ENCODE measurements at regions of chr14 and their contacts with region 1.

Region 1: DNA sequence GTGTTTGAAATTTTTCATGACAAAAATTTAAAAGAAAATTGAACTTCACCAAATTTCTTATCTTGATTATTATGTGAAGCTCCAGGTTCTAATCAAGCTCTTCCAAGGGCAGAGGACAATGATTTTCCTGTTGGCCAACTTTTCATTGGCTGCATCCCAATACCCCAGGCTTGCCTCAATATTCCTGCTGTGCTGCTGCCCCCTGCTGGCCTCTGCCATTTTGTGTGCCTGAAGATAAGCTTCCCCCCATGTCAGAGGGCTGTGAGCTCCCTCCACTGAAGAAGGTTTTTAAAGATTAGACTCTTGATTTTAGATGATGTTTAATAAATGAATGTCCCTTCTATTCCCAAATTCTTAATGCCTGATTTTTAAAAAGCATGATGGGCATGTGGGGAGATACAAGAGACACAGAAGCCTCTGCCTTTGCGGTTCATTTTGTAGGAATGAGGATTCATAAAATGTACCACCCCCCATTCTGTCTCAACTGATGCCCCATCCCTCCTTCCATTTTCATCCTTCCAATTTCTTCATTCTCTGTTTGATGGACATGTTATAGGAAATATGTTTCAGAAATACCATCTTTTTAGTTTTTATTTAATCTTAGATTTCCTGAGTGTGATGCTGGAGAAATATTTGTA is 76.7 kb upstream of the RGS6 start:
- DNase-seq: peak; percentile 31
- ATAC-seq: peak; percentile 85
- H3K4me3 ChIP-seq: no peak overlapping the region
- H3K27ac ChIP-seq: peak overlapping the region; percentile 58; the same call in 1 of the 2 replicates
- H3K4me1 ChIP-seq: peaks cover 10% of the 10 kb centered on the region
- H3K27me3 ChIP-seq: no peaks in the 10 kb centered on the region
- CTCF ChIP-seq: peak; percentile 68 to 77 (median 71)
- EP300 ChIP-seq: no peak
- POLR2A ChIP-seq: no peak
- RAD21 ChIP-seq: peak; percentile 78

Region 2: GRCh38 chr14:71103662-71104484 is 751.6 kb before region 1 on chr14:
- CTCF ChIA-PET with region 1: interaction called, 27 read pairs
- POLR2A ChIA-PET with region 1: no interaction called
- RAD21 ChIA-PET with region 1: interaction called, 3 read pairs
- SMC1A ChIA-PET with region 1: interaction called, 5 read pairs
- in situ Hi-C with region 1: no loop called
- intact Hi-C with region 1: no loop called
- DNase-seq: peak; percentile 13
- ATAC-seq: peak; percentile 88
- H3K4me3 ChIP-seq: no peak overlapping the region
- H3K27ac ChIP-seq: no peak overlapping the region
- H3K4me1 ChIP-seq: no peaks in the 10 kb centered on the region
- H3K27me3 ChIP-seq: no peaks in the 10 kb centered on the region
- CTCF ChIP-seq: peak; percentile 65 to 82 (median 75)
- EP300 ChIP-seq: no peak
- POLR2A ChIP-seq: no peak
- RAD21 ChIP-seq: peak; percentile 69

Region 3: GRCh38 chr14:71138448-71139293 is 716.8 kb before region 1 on chr14:
- CTCF ChIA-PET with region 1: interaction called, 88 read pairs
- POLR2A ChIA-PET with region 1: no interaction called
- RAD21 ChIA-PET with region 1: interaction called, 29 read pairs
- SMC1A ChIA-PET with region 1: interaction called, 31 read pairs
- in situ Hi-C with region 1: no loop called
- intact Hi-C with region 1: loop called (anchors 5 kb)
- DNase-seq: peak; percentile 9
- ATAC-seq: peak; percentile 85
- H3K4me3 ChIP-seq: no peak overlapping the region
- H3K27ac ChIP-seq: no peak overlapping the region
- H3K4me1 ChIP-seq: peaks cover 17% of the 10 kb centered on the region
- H3K27me3 ChIP-seq: no peaks in the 10 kb centered on the region
- CTCF ChIP-seq: peak; percentile 87 to 90 (median 88)
- EP300 ChIP-seq: no peak
- POLR2A ChIP-seq: no peak
- RAD21 ChIP-seq: peak; percentile 99

Region 4: GRCh38 chr14:71225113-71225512 is 630.4 kb before region 1 on chr14:
- CTCF ChIA-PET with region 1: no interaction called
- POLR2A ChIA-PET with region 1: no interaction called
- RAD21 ChIA-PET with region 1: no interaction called
- SMC1A ChIA-PET with region 1: no interaction called
- in situ Hi-C with region 1: no loop called
- intact Hi-C with region 1: no loop called
- DNase-seq: no peak
- ATAC-seq: no peak
- H3K4me3 ChIP-seq: no peak overlapping the region
- H3K27ac ChIP-seq: no peak overlapping the region
- H3K4me1 ChIP-seq: no peaks in the 10 kb centered on the region
- H3K27me3 ChIP-seq: no peaks in the 10 kb centered on the region
- CTCF ChIP-seq: no peak
- EP300 ChIP-seq: no peak
- POLR2A ChIP-seq: no peak
- RAD21 ChIP-seq: no peak

Region 5: DNA sequence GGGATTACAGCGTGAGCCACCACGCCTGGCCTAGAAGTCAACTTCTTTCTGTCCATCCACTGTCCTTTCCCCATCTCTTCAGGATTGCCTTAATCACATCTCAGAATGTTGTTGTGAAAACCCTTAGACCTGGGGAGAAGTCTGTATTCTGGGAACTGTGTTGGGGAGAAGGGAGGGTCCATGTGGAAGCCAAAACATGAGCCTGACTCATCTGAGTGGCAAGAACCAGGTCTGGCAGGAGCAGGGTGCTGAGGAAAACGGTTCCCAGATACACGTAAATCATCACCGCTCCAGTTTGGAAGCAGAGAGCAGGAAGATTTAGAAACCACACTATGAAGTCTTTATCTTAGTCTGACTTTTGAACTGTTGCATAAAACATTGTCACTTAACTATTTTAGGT is 168.8 kb before region 1 on chr14:
- CTCF ChIA-PET with region 1: no interaction called
- POLR2A ChIA-PET with region 1: no interaction called
- RAD21 ChIA-PET with region 1: no interaction called
- SMC1A ChIA-PET with region 1: no interaction called
- in situ Hi-C with region 1: no loop called
- intact Hi-C with region 1: no loop called
- DNase-seq: no peak
- ATAC-seq: no peak
- H3K4me3 ChIP-seq: no peak overlapping the region
- H3K27ac ChIP-seq: no peak overlapping the region
- H3K4me1 ChIP-seq: no peaks in the 10 kb centered on the region
- H3K27me3 ChIP-seq: no peaks in the 10 kb centered on the region
- CTCF ChIP-seq: no peak
- EP300 ChIP-seq: no peak
- POLR2A ChIP-seq: no peak
- RAD21 ChIP-seq: no peak

Region 6: GRCh38 chr14:71753126-71753830 is 102.2 kb before region 1 on chr14:
- CTCF ChIA-PET with region 1: interaction called, 84 read pairs
- POLR2A ChIA-PET with region 1: interaction called, 4 read pairs
- RAD21 ChIA-PET with region 1: interaction called, 44 read pairs
- SMC1A ChIA-PET with region 1: interaction called, 46 read pairs
- in situ Hi-C with region 1: no loop called
- intact Hi-C with region 1: loop called (anchors 10 kb)
- DNase-seq: peak; percentile 27
- ATAC-seq: peak; percentile 85
- H3K4me3 ChIP-seq: no peak overlapping the region
- H3K27ac ChIP-seq: no peak overlapping the region
- H3K4me1 ChIP-seq: no peaks in the 10 kb centered on the region
- H3K27me3 ChIP-seq: no peaks in the 10 kb centered on the region
- CTCF ChIP-seq: peak; percentile 88 to 94 (median 91)
- EP300 ChIP-seq: no peak
- POLR2A ChIP-seq: no peak
- RAD21 ChIP-seq: peak; percentile 99

Region 7: DNA sequence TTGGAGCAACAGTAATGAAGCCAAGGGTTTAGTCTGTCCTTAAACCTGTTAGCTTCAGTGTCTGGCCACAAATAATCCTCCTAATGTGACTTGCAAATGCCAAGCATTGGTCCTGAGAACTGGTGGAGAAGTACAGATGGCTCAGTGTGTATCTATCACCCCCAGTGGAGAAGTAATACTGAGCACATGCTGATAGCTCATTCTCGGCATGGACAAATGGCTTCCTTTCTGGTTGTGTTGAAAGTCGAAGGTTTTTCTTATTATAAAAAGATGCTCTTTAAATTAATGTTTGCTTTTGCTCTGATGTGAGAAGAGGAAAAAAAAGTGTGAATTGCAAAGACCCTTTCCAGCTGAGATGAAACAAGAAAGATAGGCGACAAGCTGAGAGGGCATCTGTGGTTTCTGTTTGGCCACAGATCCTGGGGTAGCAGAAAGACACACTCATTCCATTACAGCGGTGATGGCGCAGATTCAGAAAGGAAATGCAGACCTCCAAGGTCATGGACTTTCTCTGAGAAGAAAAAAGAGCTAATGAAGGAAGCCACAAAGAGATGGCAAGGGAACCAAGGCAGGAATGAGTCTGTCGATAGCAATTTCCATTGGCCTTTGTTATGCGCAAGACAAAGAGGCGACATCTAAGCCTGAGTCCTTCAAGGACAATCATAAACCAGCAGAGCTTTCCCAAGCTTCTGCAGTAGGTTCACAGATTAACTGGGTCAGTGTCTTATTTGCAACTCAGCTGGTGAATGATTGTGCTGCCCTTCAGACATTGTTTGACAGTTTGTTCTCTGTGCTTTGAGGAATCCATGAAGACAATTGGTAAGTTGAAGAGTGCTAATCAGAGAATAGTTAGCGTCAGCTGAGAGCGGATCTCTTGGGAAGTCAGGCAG is 78.8 kb before region 1 on chr14:
- CTCF ChIA-PET with region 1: interaction called, 10 read pairs
- POLR2A ChIA-PET with region 1: interaction called, 3 read pairs
- RAD21 ChIA-PET with region 1: interaction called, 4 read pairs
- SMC1A ChIA-PET with region 1: interaction called, 10 read pairs
- in situ Hi-C with region 1: no loop called
- intact Hi-C with region 1: no loop called
- DNase-seq: peak; percentile 25
- ATAC-seq: peak; percentile 84
- H3K4me3 ChIP-seq: no peak overlapping the region
- H3K27ac ChIP-seq: no peak overlapping the region
- H3K4me1 ChIP-seq: no peaks in the 10 kb centered on the region
- H3K27me3 ChIP-seq: no peaks in the 10 kb centered on the region
- CTCF ChIP-seq: 0 out of 6 replicates have a peak, but pooled peaks of 1 of the 3 experiments have one; percentile 7
- EP300 ChIP-seq: no peak
- POLR2A ChIP-seq: no peak
- RAD21 ChIP-seq: no peak

Region 8: GRCh38 chr14:71834284-71835204 is 21.0 kb before region 1 on chr14:
- CTCF ChIA-PET with region 1: interaction called, 10 read pairs
- POLR2A ChIA-PET with region 1: no interaction called
- RAD21 ChIA-PET with region 1: interaction called, 3 read pairs
- SMC1A ChIA-PET with region 1: interaction called, 4 read pairs
- in situ Hi-C with region 1: no loop called
- intact Hi-C with region 1: no loop called
- DNase-seq: no peak
- ATAC-seq: no peak
- H3K4me3 ChIP-seq: no peak overlapping the region
- H3K27ac ChIP-seq: no peak overlapping the region
- H3K4me1 ChIP-seq: no peaks in the 10 kb centered on the region
- H3K27me3 ChIP-seq: no peaks in the 10 kb centered on the region
- CTCF ChIP-seq: no peak
- EP300 ChIP-seq: no peak
- POLR2A ChIP-seq: no peak
- RAD21 ChIP-seq: no peak

Region 9: DNA sequence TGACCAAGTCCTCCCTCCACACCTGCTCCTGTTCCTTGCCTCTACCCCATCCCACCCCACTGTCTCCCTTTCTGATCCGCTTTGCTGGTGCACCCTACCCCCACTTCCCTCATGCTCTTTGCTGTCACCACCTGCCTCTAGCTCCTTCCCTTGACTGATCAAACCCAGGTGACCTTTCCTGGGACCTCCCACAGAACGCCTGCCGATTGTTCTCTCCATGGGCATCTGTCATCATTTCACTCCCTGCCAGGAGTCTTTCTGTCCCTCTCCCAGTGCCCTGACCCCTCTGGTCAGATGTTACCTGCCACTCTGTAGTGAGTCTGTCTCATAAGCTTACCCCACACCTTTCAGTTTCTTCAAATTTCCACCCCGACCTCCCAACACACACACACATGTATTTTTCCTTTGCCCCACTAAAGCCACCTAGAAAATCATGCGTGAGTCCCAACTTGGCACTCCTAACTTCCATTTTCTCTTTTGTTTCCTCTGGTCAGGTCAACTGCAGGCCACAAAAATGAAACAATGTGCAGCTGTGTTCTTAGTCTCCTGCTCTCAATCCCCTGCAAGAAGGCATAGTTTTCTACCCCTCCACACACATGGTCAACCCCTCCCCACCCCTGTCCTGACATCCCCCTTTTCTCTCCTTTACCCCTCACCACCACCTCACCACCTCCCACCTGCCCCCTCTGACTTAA is 808.6 kb after region 1 on chr14:
- CTCF ChIA-PET with region 1: no interaction called
- POLR2A ChIA-PET with region 1: no interaction called
- RAD21 ChIA-PET with region 1: no interaction called
- SMC1A ChIA-PET with region 1: no interaction called
- in situ Hi-C with region 1: no loop called
- intact Hi-C with region 1: no loop called
- DNase-seq: no peak
- ATAC-seq: no peak
- H3K4me3 ChIP-seq: no peak overlapping the region
- H3K27ac ChIP-seq: no peak overlapping the region
- H3K4me1 ChIP-seq: no peaks in the 10 kb centered on the region; the same call in 1 of the 2 replicates
- H3K27me3 ChIP-seq: no peaks in the 10 kb centered on the region
- CTCF ChIP-seq: no peak
- EP300 ChIP-seq: no peak
- POLR2A ChIP-seq: no peak
- RAD21 ChIP-seq: no peak

Measured in GM12878 (cell line).